H1 (cell line): ENCODE measurements at regions of chr9 and their contacts with region 1.

Region 1: DNA sequence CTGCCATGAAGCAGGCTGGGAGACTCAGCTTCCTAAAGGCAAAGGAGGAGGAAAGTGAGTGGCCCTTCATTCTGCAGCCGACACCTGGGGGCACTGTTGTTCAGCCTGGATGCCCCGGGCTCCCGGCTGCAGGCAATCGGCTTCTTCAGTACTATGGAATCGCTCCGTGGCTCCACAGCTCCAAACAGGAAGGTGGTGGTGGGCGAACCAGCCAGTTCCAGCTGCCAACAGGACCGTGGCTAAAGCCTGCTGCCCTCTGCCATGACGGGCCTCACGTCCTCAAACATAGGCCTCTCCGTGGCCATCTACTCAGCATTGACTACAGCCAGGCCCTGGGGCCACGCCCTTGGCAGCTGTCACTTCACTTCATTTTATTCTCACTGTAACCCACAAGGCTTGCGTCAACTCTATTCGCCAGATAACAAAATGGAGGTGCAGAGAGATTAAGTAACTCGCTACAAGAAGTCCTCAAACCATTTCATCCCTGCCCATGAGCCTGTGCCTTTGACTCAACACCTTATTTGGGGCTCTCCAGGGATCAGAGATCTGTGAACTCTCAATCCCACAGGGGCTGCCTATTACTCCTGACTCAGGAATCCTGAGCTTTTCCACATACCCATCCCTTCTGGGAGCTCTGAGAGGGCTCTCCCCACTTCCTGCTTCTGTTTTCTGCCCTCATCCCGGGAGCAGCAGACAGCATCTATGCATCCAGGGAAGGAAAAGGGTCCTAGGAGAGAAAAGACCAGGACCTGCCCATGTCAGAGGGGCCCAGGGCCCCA is 38.0 kb downstream of the PAX5 start:
- DNase-seq: peak; percentile 68 to 91
- H3K4me3 ChIP-seq: peak overlapping the region in 1 of 4 experiments; percentile 37; a peak in 3 of 8 replicates
- H3K27ac ChIP-seq: no peak overlapping the region
- H3K4me1 ChIP-seq: peaks cover 0 to 10% (median 3%) of the 10 kb centered on the region in 4 experiments; a peak in 4 of 7 replicates
- H3K27me3 ChIP-seq: peaks cover 0 to 20% (median 19%) of the 10 kb centered on the region in 4 experiments; a peak in 6 of 7 replicates
- CTCF ChIP-seq: peak; percentile 88 to 93 (median 92)
- EP300 ChIP-seq: no peak; a peak in 1 of 3 replicates
- POLR2A ChIP-seq: no peak
- RAD21 ChIP-seq: peak; percentile 94 to 96

Region 2: GRCh38 chr9:36888551-36888950 is 107.6 kb before region 1 on chr9:
- CTCF ChIA-PET with region 1: interaction called, 657 read pairs
- POLR2A ChIA-PET with region 1: no interaction called
- DNase-seq: no peak
- H3K4me3 ChIP-seq: no peak overlapping the region
- H3K27ac ChIP-seq: no peak overlapping the region
- H3K4me1 ChIP-seq: peaks cover 0 to 2% (median 0%) of the 10 kb centered on the region in 4 experiments; a peak in 3 of 7 replicates
- H3K27me3 ChIP-seq: no peaks in the 10 kb centered on the region; a peak in 1 of 7 replicates
- CTCF ChIP-seq: no peak
- EP300 ChIP-seq: no peak
- POLR2A ChIP-seq: no peak
- RAD21 ChIP-seq: no peak

Region 3: GRCh38 chr9:36974731-36975130 is 21.4 kb before region 1 on chr9:
- CTCF ChIA-PET with region 1: interaction called, 56 read pairs
- POLR2A ChIA-PET with region 1: no interaction called
- DNase-seq: peak in 1 of 2 experiments; percentile 41
- H3K4me3 ChIP-seq: no peak overlapping the region
- H3K27ac ChIP-seq: no peak overlapping the region
- H3K4me1 ChIP-seq: peaks cover 0 to under 1% (median under 1%) of the 10 kb centered on the region in 4 experiments; a peak in 2 of 7 replicates
- H3K27me3 ChIP-seq: peaks cover 0 to 3% (median 1%) of the 10 kb centered on the region in 4 experiments; a peak in 2 of 7 replicates
- CTCF ChIP-seq: peak; percentile 29 to 41 (median 33)
- EP300 ChIP-seq: no peak
- POLR2A ChIP-seq: no peak
- RAD21 ChIP-seq: peak; percentile 30 to 45; a peak in 3 of 4 replicates

Region 4: DNA sequence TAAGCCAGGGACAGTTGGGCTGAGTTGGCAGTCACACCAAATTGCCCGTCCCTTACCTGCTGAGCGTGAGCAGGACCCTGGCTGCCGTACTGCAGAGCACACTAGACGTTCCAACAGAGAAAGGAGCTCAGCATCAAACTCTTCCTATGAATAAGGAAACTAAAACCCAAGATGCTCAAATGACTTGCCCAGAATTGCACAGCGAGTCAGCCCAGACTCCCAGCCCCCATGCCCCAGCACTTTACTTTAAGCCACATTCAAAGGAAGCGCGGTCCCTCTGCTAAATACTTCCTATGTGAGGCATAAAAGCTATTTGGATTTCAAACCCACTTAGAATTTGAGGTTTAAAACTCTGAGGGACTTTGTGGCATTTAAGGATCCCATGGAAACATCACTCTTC is 14.1 kb after region 1 on chr9:
- CTCF ChIA-PET with region 1: interaction called, 33 read pairs
- POLR2A ChIA-PET with region 1: interaction called, 3 read pairs
- DNase-seq: no peak
- H3K4me3 ChIP-seq: no peak overlapping the region
- H3K27ac ChIP-seq: no peak overlapping the region
- H3K4me1 ChIP-seq: peaks cover 0 to 2% (median 0%) of the 10 kb centered on the region in 4 experiments; a peak in 1 of 7 replicates
- H3K27me3 ChIP-seq: peaks cover 0 to 12% (median 3%) of the 10 kb centered on the region in 4 experiments; a peak in 2 of 7 replicates
- CTCF ChIP-seq: no peak
- EP300 ChIP-seq: no peak
- POLR2A ChIP-seq: no peak
- RAD21 ChIP-seq: no peak

Region 5: DNA sequence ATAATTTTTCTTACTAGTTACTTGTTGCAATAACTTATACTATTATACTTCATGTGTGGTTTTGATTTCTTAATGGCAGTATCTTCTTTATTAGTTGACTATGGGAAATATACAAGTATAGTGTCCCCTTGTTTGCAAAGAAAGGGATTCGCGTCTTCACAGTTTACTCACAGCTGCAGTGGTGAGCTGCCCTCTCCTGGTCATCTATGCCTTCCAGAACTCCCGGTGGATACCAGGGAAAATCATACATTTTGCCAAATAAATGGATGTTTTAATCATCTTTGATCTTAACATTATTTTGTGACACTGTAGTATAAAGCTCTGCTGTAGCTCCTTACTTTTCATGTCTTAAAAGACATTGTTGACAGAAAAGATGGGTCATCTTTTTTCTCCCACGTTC is 266.3 kb after region 1 on chr9:
- CTCF ChIA-PET with region 1: interaction called, 38 read pairs
- POLR2A ChIA-PET with region 1: no interaction called
- DNase-seq: no peak
- H3K4me3 ChIP-seq: no peak overlapping the region
- H3K27ac ChIP-seq: no peak overlapping the region
- H3K4me1 ChIP-seq: peaks cover 3 to 6% (median 3%) of the 10 kb centered on the region in 4 experiments
- H3K27me3 ChIP-seq: no peaks in the 10 kb centered on the region
- CTCF ChIP-seq: peak; percentile 64 to 86 (median 73)
- EP300 ChIP-seq: no peak
- POLR2A ChIP-seq: no peak
- RAD21 ChIP-seq: peak; percentile 91 to 93

Region 6: DNA sequence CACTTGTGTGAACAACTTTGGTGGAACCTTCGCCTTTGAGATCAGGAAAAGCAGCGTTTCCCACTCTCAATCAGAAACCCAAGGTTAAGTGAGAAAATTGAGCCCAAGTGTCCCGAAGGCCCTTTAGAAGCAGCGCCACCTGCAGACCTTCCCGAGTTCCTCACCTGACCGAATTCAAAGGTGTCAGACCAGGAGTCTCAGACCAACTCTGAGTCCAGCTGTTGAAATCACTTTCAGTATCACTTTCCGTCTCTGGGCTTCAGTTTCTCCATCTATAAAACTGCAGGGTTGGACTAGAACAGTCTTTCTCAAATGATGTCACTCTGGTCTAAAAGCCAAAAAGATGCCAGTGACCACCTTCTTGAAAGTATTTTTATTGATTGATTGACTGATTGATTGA is 394.6 kb after region 1 on chr9:
- CTCF ChIA-PET with region 1: interaction called, 14 read pairs
- POLR2A ChIA-PET with region 1: no interaction called
- DNase-seq: peak; percentile 31 to 70
- H3K4me3 ChIP-seq: no peak overlapping the region
- H3K27ac ChIP-seq: no peak overlapping the region
- H3K4me1 ChIP-seq: no peaks in the 10 kb centered on the region; a peak in 1 of 7 replicates
- H3K27me3 ChIP-seq: no peaks in the 10 kb centered on the region
- CTCF ChIP-seq: peak; percentile 76 to 88 (median 79)
- EP300 ChIP-seq: no peak
- POLR2A ChIP-seq: no peak
- RAD21 ChIP-seq: peak; percentile 66 to 73